ENCODE measurements at regions of chr5 and their contacts with region 1.

Region 1: GRCh38 chr5:60677844-60678664 is 21.9 kb downstream of the DEPDC1B start:
- DNase-seq: no peak
- H3K4me3 Mint-ChIP-seq: no peak overlapping the region
- H3K27ac Mint-ChIP-seq: no peak overlapping the region
- H3K4me1 Mint-ChIP-seq: peaks cover 4% of the 10 kb centered on the region
- H3K27me3 Mint-ChIP-seq: no peaks in the 10 kb centered on the region

Region 2: GRCh38 chr5:60597572-60598320 is 80.3 kb before region 1 on chr5:
- CTCF ChIA-PET with region 1: no interaction called
- POLR2A ChIA-PET with region 1: no interaction called
- intact Hi-C with region 1: no loop called
- DNase-seq: no peak
- H3K4me3 Mint-ChIP-seq: no peak overlapping the region
- H3K27ac Mint-ChIP-seq: no peak overlapping the region
- H3K4me1 Mint-ChIP-seq: peaks cover 12% of the 10 kb centered on the region
- H3K27me3 Mint-ChIP-seq: no peaks in the 10 kb centered on the region

Region 3: GRCh38 chr5:60843936-60844905 is 166.2 kb after region 1 on chr5 and contains the start of gene ELOVL7:
- CTCF ChIA-PET with region 1: no interaction called
- POLR2A ChIA-PET with region 1: no interaction called
- intact Hi-C with region 1: loop called (anchors 1 kb)
- DNase-seq: peak; percentile 68
- H3K4me3 Mint-ChIP-seq: peak within 1 kb of the TSS; percentile 75
- H3K27ac Mint-ChIP-seq: no peak within 1 kb of the TSS
- H3K4me1 Mint-ChIP-seq: peaks cover 11% of the 10 kb centered on the region
- H3K27me3 Mint-ChIP-seq: peaks cover 46% of the 10 kb centered on the region
- total RNA-seq, gene ELOVL7: 0.34 to 0.38 TPM

Region 4: DNA sequence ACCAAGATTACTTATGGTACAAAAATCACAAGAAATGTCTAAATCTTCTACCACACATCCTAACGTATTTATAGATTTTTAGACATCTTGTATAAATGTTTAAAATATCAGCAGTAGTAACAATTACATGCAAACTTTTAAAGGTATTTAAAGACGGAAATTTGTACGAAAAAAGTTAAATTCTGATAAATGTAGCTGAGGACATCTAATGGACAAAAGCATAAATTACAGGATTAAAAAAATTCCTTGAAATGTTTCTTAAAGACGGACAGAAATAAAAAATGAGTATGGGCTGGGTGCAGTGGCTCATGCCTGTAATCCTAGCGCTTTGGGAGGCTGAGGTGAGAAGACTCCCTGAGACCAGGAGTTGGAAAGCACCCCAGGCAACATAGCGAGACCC is 251.0 kb after region 1 on chr5:
- CTCF ChIA-PET with region 1: no interaction called
- POLR2A ChIA-PET with region 1: no interaction called
- intact Hi-C with region 1: loop called (anchors 5 kb)
- DNase-seq: no peak
- H3K4me3 Mint-ChIP-seq: no peak overlapping the region
- H3K27ac Mint-ChIP-seq: no peak overlapping the region
- H3K4me1 Mint-ChIP-seq: no peaks in the 10 kb centered on the region
- H3K27me3 Mint-ChIP-seq: no peaks in the 10 kb centered on the region

Region 5: DNA sequence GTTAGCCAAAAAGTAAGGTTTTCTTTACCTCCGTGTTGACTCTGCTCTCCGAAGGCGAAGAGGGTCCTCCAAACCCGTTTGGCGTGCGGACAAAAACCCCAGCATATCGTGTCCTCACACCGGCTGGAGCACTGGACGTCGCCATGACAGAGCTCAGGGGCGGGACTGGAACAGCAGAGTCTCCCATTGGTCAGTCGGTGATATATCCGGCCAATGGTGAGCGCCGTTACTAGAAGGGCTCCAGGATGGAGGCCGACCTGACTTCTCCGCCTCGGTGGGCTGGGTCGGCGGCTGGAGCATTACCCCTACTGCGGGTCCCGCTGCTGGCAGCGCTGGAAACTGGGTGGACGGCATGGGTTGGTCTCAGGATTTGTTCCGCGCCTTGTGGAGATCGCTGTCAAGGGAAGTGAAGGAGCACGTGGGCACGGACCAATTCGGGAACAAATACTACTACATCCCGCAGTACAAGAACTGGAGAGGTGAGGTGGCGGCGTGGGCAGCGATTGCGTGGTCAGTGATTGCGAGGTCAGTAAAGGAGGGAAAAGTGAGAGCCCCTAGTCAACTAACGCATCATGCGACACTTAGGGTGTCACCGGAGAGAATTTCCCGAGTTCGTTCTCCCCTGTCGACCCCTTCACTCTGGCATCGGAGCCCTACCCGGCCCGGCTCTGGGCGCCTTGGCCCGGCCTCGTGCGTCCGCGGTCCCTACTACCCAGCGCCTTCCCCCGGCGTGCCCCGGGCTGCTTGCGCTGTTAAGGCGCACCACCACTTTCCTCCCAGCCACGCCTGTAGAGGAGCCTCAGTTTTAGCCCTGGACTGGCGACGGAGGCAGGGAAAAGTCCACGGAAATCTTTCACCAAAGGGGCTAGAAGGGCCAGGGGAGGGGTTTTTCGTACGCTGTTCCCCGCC is 267.1 kb after region 1 on chr5 and contains the starts of genes ERCC8 and NDUFAF2:
- CTCF ChIA-PET with region 1: no interaction called
- POLR2A ChIA-PET with region 1: no interaction called
- intact Hi-C with region 1: loop called (anchors 5 kb)
- DNase-seq: peak; percentile 93
- H3K4me3 Mint-ChIP-seq: no peak within 1 kb of the TSS
- H3K27ac Mint-ChIP-seq: peak within 1 kb of the TSS; percentile 77
- H3K4me1 Mint-ChIP-seq: peaks cover 23% of the 10 kb centered on the region
- H3K27me3 Mint-ChIP-seq: no peaks in the 10 kb centered on the region
- total RNA-seq, gene ERCC8: 7.7 to 9.1 TPM
- total RNA-seq, gene NDUFAF2: 35.6 to 38.4 TPM

Region 6: GRCh38 chr5:60960591-60960990 is 282.5 kb after region 1 on chr5:
- CTCF ChIA-PET with region 1: no interaction called
- POLR2A ChIA-PET with region 1: no interaction called
- intact Hi-C with region 1: loop called (anchors 1 kb)
- DNase-seq: no peak
- H3K4me3 Mint-ChIP-seq: no peak overlapping the region
- H3K27ac Mint-ChIP-seq: no peak overlapping the region
- H3K4me1 Mint-ChIP-seq: peaks cover 4% of the 10 kb centered on the region
- H3K27me3 Mint-ChIP-seq: no peaks in the 10 kb centered on the region

Measured in activated CD4-positive, alpha-beta memory T cell treated with anti-CD3 and anti-CD28 coated beads for 36 hours (primary cell).